ENCODE measurements at regions of chr15 and their contacts with region 1.

Region 1: GRCh38 chr15:82197733-82198594 is 64.6 kb downstream of the EFL1 start:
- DNase-seq: peak; percentile 71
- H3K4me3 ChIP-seq: no peak overlapping the region
- H3K27ac ChIP-seq: no peak overlapping the region
- H3K4me1 ChIP-seq: no peaks in the 10 kb centered on the region
- H3K27me3 ChIP-seq: no peaks in the 10 kb centered on the region
- CTCF ChIP-seq: peak; percentile 52

Region 2: DNA sequence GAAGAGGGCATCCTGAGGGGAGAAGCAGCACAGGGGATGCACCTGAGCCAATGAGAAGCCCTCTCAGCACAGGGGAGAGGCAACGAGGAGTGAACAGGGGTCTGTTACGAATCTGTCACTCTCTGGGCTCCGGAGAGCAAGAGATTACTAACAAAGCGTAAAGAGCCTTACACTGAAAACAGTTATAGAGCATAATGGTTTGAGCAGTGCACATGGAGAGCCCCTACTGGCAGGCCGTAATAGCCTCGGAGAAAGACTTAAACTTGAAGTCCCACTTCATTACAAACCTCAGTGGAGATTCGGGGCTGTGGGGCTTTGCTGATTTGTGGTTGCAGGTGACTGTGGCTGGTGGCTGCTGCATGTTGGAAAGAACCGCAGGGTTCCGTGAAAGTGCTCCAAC is 552.5 kb before region 1 on chr15:
- intact Hi-C with region 1: no loop called
- DNase-seq: no peak
- H3K4me3 ChIP-seq: no peak overlapping the region
- H3K27ac ChIP-seq: no peak overlapping the region
- H3K4me1 ChIP-seq: no peaks in the 10 kb centered on the region
- H3K27me3 ChIP-seq: no peaks in the 10 kb centered on the region
- CTCF ChIP-seq: no peak

Region 3: GRCh38 chr15:82111918-82112317 is 86.0 kb before region 1 on chr15:
- intact Hi-C with region 1: loop called (anchors 10 kb)
- DNase-seq: no peak
- H3K4me3 ChIP-seq: no peak overlapping the region
- H3K27ac ChIP-seq: no peak overlapping the region
- H3K4me1 ChIP-seq: no peaks in the 10 kb centered on the region
- H3K27me3 ChIP-seq: no peaks in the 10 kb centered on the region
- CTCF ChIP-seq: no peak

Measured in colonic mucosa (tissue), 4 donors.